ENCODE measurements at regions of chr1 and their contacts with region 1.

Region 1: DNA sequence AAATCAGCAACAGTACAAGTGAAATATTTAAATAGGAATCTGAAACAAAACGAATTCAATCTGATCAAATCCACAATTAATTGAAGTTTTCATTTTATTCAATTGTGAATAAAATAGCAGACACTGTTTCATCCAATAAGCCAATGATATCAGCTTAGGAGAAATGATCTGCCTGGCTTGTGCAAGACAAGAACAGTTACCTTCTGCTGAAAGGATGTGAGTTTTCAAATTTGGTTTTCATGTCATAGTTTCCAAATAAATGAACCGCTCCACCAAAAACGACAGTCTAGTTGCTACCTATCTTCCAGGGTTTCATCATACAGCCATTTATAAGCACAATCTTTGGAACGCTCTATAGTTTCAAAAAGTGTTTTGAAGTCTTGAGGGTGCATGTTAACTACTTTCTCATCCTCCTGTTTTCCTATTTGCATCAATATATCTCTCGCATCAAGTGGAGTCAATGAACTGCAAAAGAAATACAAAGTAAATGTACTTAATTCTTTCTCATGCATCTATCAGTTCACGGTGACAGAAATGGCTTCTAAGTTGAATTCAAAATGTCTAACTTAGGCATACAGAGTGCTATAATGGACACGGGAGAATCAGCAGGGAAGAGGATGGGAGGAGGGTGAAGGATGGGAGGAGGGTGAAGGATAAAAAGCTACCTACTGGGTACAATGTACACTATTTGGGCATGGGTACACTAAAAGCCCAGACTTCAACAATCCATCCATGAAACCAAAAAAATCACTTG is 25.1 kb downstream of the TFB2M start:
- DNase-seq: no peak
- ATAC-seq: no peak
- H3K4me3 ChIP-seq: no peak overlapping the region
- H3K27ac ChIP-seq: no peak overlapping the region
- H3K4me1 ChIP-seq: no peaks in the 10 kb centered on the region
- H3K27me3 ChIP-seq: no peaks in the 10 kb centered on the region
- CTCF ChIP-seq: no peak

Region 2: DNA sequence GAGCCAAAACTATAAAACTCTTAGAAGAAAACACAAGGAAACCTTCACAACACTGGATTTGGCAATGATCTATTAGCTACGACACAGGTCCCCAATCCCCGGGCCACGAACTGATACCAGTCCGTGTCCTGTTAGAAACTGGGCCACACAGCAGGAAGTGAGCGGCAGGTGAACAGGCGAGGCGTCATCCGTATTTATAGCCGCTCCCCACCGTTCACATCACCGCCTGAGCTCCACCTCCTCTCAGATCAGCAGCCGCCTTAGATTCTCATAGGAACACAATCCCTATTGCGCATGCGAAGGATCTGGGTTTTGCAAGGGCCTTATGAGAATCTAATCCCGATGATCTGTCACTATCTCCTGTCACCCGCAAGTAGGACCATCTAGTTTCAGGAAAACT is 13.3 kb after region 1 on chr1:
- CTCF ChIA-PET with region 1: interaction called, 15 read pairs
- POLR2A ChIA-PET with region 1: no interaction called
- in situ Hi-C with region 1: no loop called
- intact Hi-C with region 1: no loop called
- DNase-seq: no peak
- ATAC-seq: no peak
- H3K4me3 ChIP-seq: no peak overlapping the region
- H3K27ac ChIP-seq: no peak overlapping the region
- H3K4me1 ChIP-seq: no peaks in the 10 kb centered on the region
- H3K27me3 ChIP-seq: no peaks in the 10 kb centered on the region
- CTCF ChIP-seq: no peak

Region 3: GRCh38 chr1:246798606-246799515 is 257.9 kb after region 1 on chr1:
- CTCF ChIA-PET with region 1: no interaction called
- POLR2A ChIA-PET with region 1: no interaction called
- in situ Hi-C with region 1: no loop called
- intact Hi-C with region 1: no loop called
- DNase-seq: no peak
- ATAC-seq: peak; percentile 41
- H3K4me3 ChIP-seq: no peak overlapping the region
- H3K27ac ChIP-seq: no peak overlapping the region
- H3K4me1 ChIP-seq: no peaks in the 10 kb centered on the region
- H3K27me3 ChIP-seq: no peaks in the 10 kb centered on the region
- CTCF ChIP-seq: no peak

Measured in Panc1 (cell line).